B cell (primary cell): ENCODE measurements at regions of chr7 and their contacts with region 1.

Region 1: DNA sequence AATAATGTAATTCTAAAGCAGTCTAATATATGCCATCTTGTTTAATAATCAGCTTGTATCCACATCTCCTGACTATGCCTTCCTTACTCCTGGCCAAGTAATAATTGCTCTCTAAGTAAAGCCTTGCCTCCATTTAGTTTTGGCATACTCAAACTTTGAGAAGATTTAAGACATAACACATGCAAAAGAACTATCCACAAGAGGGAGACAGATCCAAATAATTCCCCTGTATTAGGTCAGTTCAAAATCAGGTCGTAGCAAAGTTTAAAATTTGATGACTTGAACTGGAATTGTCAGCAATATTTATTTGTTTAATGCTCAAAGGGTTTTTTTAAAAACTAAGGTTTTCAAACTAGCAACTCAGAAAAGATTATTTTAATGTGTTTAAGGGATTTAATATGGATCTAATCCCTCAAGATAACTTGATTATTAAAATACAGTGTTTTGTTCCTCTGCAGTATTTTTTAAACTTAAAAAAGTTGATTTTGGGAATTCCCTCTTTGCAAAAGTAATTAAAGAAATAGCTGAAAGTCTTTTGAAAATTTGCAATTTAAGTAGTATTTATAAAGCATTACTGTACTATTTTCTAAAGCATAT is 95.3 kb downstream of the HDAC9 start:
- DNase-seq: peak; percentile 21
- ATAC-seq: peak; percentile 24
- H3K4me3 ChIP-seq: no peak overlapping the region
- H3K4me3 Mint-ChIP-seq: no peak overlapping the region
- H3K27ac ChIP-seq: peak overlapping the region in 1 of 2 donors; percentile 60
- H3K27ac Mint-ChIP-seq: no peak overlapping the region
- H3K4me1 ChIP-seq: peaks cover 14 to 19% of the 10 kb centered on the region in 2 donors
- H3K4me1 Mint-ChIP-seq: peaks cover 24% of the 10 kb centered on the region
- H3K27me3 ChIP-seq: no peaks in the 10 kb centered on the region
- H3K27me3 Mint-ChIP-seq: no peaks in the 10 kb centered on the region
- CTCF ChIP-seq: peak; percentile 41

Region 2: DNA sequence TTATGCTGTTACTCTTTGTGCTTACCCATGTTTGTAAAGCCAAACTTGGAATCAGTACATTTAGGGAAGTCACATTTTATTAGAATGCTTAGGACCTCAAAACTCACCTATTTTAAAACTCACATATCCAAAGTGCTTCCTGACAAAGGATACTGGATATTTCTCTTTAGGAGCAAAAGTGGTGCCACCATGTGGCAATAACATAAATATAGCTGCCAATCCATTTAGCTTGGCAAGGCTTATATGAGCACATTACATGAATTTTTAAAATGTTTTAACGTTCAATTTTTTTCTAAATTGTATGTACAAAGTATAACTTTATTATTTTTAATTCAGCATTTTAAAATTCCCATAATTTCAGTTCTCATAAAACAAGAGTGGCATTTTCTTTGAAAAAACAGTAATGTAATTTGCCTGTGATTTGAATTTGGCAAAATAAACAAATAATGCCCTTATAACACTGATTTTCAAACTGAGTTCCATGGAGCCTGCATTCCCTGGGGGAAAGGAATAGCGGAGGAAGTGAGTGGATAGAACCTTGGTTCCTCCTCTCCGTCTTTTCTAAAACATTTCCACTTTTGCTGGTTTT is 19.9 kb before region 1 on chr7:
- CTCF ChIA-PET with region 1: interaction called, 37 read pairs
- POLR2A ChIA-PET with region 1: interaction called, 4 read pairs
- intact Hi-C with region 1: loop called (anchors 2 kb)
- DNase-seq: no peak
- ATAC-seq: no peak
- H3K4me3 ChIP-seq: no peak overlapping the region
- H3K4me3 Mint-ChIP-seq: no peak overlapping the region
- H3K27ac ChIP-seq: peak overlapping the region in 1 of 2 donors; percentile 44
- H3K27ac Mint-ChIP-seq: peak overlapping the region; percentile 20
- H3K4me1 ChIP-seq: peaks cover 45 to 56% of the 10 kb centered on the region in 2 donors
- H3K4me1 Mint-ChIP-seq: peaks cover 62% of the 10 kb centered on the region
- H3K27me3 ChIP-seq: no peaks in the 10 kb centered on the region
- H3K27me3 Mint-ChIP-seq: no peaks in the 10 kb centered on the region
- CTCF ChIP-seq: no peak

Region 3: DNA sequence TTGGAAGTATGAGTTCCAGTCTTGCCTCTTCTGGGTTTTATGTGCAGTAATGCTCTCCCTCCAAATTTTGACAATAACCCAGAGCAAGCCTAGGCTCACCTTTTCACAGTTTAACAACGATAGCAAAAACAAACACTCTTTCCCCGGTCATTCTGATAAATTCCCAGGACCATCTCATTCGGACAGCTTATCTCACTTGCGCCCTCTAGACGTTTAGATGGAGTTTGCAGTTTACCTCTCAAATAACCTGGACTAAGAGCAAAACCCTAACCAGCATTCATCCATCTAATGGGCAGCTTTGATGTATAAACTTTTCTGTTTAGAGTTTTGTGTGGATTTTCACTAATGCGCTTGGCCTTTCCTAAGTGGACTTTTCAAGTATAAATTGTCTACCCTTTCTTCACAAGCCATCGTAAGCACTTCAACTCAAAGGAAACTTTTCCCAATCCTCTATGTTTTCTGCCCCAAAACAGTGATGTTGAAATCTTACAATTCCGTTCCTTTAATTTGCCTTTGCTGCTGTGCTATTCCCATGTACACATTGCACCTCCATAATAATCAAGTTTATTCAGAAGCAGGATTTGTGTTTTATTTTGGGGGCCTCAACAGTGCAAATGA is 19.6 kb after region 1 on chr7:
- CTCF ChIA-PET with region 1: interaction called, 8 read pairs
- POLR2A ChIA-PET with region 1: no interaction called
- intact Hi-C with region 1: loop called (anchors 2 kb)
- DNase-seq: peak; percentile 44
- ATAC-seq: peak; percentile 31
- H3K4me3 ChIP-seq: no peak overlapping the region
- H3K4me3 Mint-ChIP-seq: no peak overlapping the region
- H3K27ac ChIP-seq: no peak overlapping the region
- H3K27ac Mint-ChIP-seq: peak overlapping the region; percentile 32
- H3K4me1 ChIP-seq: no peaks in the 10 kb centered on the region
- H3K4me1 Mint-ChIP-seq: peaks cover 7% of the 10 kb centered on the region
- H3K27me3 ChIP-seq: no peaks in the 10 kb centered on the region
- H3K27me3 Mint-ChIP-seq: no peaks in the 10 kb centered on the region
- CTCF ChIP-seq: peak; percentile 74

Region 4: GRCh38 chr7:18675579-18675978 is 84.7 kb after region 1 on chr7:
- CTCF ChIA-PET with region 1: no interaction called
- POLR2A ChIA-PET with region 1: no interaction called
- intact Hi-C with region 1: no loop called
- DNase-seq: no peak
- ATAC-seq: no peak
- H3K4me3 ChIP-seq: no peak overlapping the region
- H3K4me3 Mint-ChIP-seq: no peak overlapping the region
- H3K27ac ChIP-seq: no peak overlapping the region
- H3K27ac Mint-ChIP-seq: no peak overlapping the region
- H3K4me1 ChIP-seq: peaks cover 0 to 5% of the 10 kb centered on the region in 2 donors
- H3K4me1 Mint-ChIP-seq: peaks cover 7% of the 10 kb centered on the region
- H3K27me3 ChIP-seq: no peaks in the 10 kb centered on the region
- H3K27me3 Mint-ChIP-seq: no peaks in the 10 kb centered on the region
- CTCF ChIP-seq: no peak